ENCODE measurements at regions of chr1 and their contacts with region 1.

Region 1: DNA sequence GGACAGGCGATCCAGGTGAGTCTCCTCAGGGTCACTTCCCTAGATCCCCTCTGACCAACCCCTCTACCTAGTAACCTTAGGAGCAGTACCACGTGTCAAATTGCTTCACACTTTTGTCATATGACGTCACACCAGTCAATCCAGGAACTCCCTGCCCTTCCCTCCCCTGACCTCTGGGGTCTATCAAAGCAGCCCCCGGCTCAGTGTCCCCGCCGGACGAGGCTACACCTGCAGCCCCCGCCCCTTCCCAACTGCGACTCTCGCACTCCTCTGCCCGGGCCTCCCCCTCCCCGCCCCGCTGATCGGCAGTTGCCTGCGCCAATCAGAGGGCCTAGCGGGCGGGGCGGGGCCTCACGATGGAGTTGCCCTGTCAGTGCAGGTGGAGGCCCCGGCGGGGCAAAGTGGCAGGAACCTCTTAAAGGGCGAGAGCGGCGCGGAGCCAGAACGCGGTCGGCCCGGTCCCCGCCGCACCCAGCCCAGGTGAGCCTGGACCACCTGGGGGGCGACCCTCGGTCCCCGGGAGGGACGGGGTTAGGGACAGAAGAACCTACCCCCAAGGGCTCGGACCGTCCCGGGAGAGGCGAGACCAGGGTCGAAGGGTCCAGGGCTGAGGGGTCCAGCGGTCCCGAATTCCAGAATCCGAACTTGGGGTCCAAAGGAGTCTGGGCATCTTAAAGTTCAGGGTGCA is 27.5 kb upstream of the EPB41 start:
- DNase-seq: peak; percentile 87 to 97 (median 91)
- ATAC-seq: peak; percentile 83
- H3K4me3 ChIP-seq: peak overlapping the region; percentile 98
- H3K4me3 Mint-ChIP-seq: peak overlapping the region; percentile 70 to 95 (median 84)
- H3K27ac ChIP-seq: peak overlapping the region; percentile 79
- H3K27ac Mint-ChIP-seq: peak overlapping the region; percentile 81 to 98 (median 94)
- H3K4me1 ChIP-seq: peaks cover 32 to 36% of the 10 kb centered on the region in 2 donors
- H3K4me1 Mint-ChIP-seq: peaks cover 37 to 68% (median 50%) of the 10 kb centered on the region in 7 donors
- H3K27me3 ChIP-seq: no peaks in the 10 kb centered on the region
- H3K27me3 Mint-ChIP-seq: no peaks in the 10 kb centered on the region

Region 2: DNA sequence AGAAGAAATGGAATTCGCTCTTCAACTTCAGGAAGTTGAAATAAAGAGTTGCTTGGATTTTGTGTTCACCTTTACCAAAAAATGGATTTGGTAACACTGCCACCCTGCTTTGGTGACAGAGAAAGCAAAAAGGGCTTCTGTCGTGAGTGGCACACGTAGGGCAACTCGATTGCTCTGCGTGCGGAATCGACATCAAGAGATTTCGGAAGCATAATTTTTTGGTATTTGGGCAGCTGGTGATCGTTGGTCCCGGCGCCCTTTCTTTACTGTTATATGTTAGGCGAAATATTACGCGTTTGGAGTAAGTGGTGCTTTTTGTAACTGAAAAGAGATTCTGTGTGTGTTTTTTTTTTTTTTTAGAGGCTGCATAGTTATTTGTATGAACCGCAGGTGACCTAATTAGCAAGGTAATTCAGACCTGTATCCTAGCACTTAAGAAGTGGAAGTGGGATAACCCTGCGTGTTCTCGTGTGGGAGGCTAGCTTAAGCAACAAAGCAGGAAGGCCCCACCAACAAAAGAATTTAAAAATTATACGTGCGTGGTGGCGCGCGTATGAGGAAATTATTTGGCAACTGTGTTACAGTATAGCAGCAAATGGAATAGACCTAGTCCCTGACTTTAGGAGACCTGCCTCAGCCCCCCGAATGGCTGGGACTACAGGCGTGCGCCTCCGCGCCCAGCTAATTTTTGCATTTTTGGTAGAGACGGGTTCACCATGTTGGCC is 238.2 kb before region 1 on chr1 and contains the start of gene RNU11:
- CTCF ChIA-PET with region 1: no interaction called
- POLR2A ChIA-PET with region 1: interaction called, 8 read pairs
- intact Hi-C with region 1: loop called in 1 of 2 experiments (anchors 2 kb)
- DNase-seq: peak in 8 of 9 donors; percentile 67 to 97 (median 91)
- ATAC-seq: peak; percentile 86
- H3K4me3 ChIP-seq: peak within 1 kb of the TSS; percentile 60
- H3K4me3 Mint-ChIP-seq: peak within 1 kb of the TSS; percentile 70 to 96 (median 90)
- H3K27ac ChIP-seq: peak within 1 kb of the TSS; percentile 93
- H3K27ac Mint-ChIP-seq: peak within 1 kb of the TSS; percentile 97 to 100 (median 99)
- H3K4me1 ChIP-seq: peaks cover 25 to 27% of the 10 kb centered on the region in 2 donors
- H3K4me1 Mint-ChIP-seq: peaks cover 14 to 39% (median 31%) of the 10 kb centered on the region in 7 donors
- H3K27me3 ChIP-seq: no peaks in the 10 kb centered on the region
- H3K27me3 Mint-ChIP-seq: no peaks in the 10 kb centered on the region
- total RNA-seq, gene RNU11: not detected

Region 3: GRCh38 chr1:28845786-28846543 is 40.9 kb before region 1 on chr1:
- CTCF ChIA-PET with region 1: no interaction called
- POLR2A ChIA-PET with region 1: no interaction called
- intact Hi-C with region 1: no loop called
- DNase-seq: peak in 2 of 9 donors; percentile 6 to 7
- ATAC-seq: no peak
- H3K4me3 ChIP-seq: no peak overlapping the region
- H3K4me3 Mint-ChIP-seq: peak overlapping the region in 2 of 10 donors; percentile 0 to 8
- H3K27ac ChIP-seq: no peak overlapping the region
- H3K27ac Mint-ChIP-seq: peak overlapping the region in 6 of 9 donors; percentile 9 to 86 (median 57)
- H3K4me1 ChIP-seq: no peaks in the 10 kb centered on the region
- H3K4me1 Mint-ChIP-seq: peaks cover 4 to 10% (median 8%) of the 10 kb centered on the region in 7 donors
- H3K27me3 ChIP-seq: no peaks in the 10 kb centered on the region
- H3K27me3 Mint-ChIP-seq: peaks cover 0 to 11% (median 0%) of the 10 kb centered on the region in 5 donors

Region 4: GRCh38 chr1:28926629-28927265 is 39.9 kb after region 1 on chr1:
- CTCF ChIA-PET with region 1: interaction called, 8 read pairs
- POLR2A ChIA-PET with region 1: interaction called, 5 read pairs
- intact Hi-C with region 1: loop called (anchors 1 kb)
- DNase-seq: peak in 7 of 9 donors; percentile 61 to 85 (median 80)
- ATAC-seq: peak; percentile 93
- H3K4me3 ChIP-seq: peak overlapping the region; percentile 24
- H3K4me3 Mint-ChIP-seq: peak overlapping the region; percentile 54 to 91 (median 76)
- H3K27ac ChIP-seq: peak overlapping the region; percentile 69
- H3K27ac Mint-ChIP-seq: peak overlapping the region; percentile 65 to 98 (median 91)
- H3K4me1 ChIP-seq: peaks cover 53 to 54% of the 10 kb centered on the region in 2 donors
- H3K4me1 Mint-ChIP-seq: peaks cover 46 to 85% (median 55%) of the 10 kb centered on the region in 7 donors
- H3K27me3 ChIP-seq: no peaks in the 10 kb centered on the region
- H3K27me3 Mint-ChIP-seq: no peaks in the 10 kb centered on the region

Region 5: DNA sequence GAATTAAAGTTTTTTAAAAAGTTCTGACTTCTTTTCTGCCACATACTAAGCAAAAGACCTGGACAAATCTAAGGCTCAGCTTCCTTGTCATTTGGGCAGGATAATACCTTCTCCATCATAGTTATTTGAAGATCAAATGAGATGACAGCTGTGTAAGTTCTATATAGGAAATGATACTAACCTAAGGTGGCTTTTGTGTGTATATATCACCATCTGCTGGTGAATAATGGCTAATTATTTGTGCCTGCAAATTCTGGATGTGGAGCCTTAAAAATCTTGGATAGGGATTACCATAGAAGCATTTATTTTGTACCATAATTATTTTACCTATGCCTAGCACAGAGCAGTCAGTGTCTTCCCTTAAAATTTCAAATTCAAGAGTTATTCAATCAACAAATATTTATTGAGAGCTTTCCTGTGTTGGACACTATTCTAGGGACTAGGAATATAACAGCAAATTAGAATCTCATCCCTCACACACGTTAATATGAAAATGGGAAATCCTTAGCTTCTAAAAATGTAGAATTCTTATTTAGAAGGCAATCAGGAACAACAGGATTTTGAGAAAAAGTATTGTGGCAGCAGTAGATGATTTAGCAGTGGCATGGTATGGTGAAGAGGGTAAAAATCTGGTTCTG is 147.1 kb after region 1 on chr1:
- CTCF ChIA-PET with region 1: interaction called, 105 read pairs
- POLR2A ChIA-PET with region 1: interaction called, 11 read pairs
- intact Hi-C with region 1: loop called (anchors 1 kb)
- DNase-seq: peak in 7 of 9 donors; percentile 9 to 44 (median 30)
- ATAC-seq: peak; percentile 75
- H3K4me3 ChIP-seq: no peak overlapping the region
- H3K4me3 Mint-ChIP-seq: no peak overlapping the region
- H3K27ac ChIP-seq: no peak overlapping the region
- H3K27ac Mint-ChIP-seq: peak overlapping the region in 3 of 9 donors; percentile 18 to 64 (median 48)
- H3K4me1 ChIP-seq: no peaks in the 10 kb centered on the region
- H3K4me1 Mint-ChIP-seq: peaks cover 0 to 3% (median 0%) of the 10 kb centered on the region in 7 donors
- H3K27me3 ChIP-seq: no peaks in the 10 kb centered on the region
- H3K27me3 Mint-ChIP-seq: no peaks in the 10 kb centered on the region

Region 6: GRCh38 chr1:29197585-29197924 is 310.7 kb after region 1 on chr1:
- CTCF ChIA-PET with region 1: interaction called, 36 read pairs
- POLR2A ChIA-PET with region 1: no interaction called
- intact Hi-C with region 1: loop called (anchors 1 kb)
- DNase-seq: peak in 7 of 9 donors; percentile 11 to 53 (median 34)
- ATAC-seq: peak; percentile 80
- H3K4me3 ChIP-seq: no peak overlapping the region
- H3K4me3 Mint-ChIP-seq: no peak overlapping the region
- H3K27ac ChIP-seq: no peak overlapping the region
- H3K27ac Mint-ChIP-seq: no peak overlapping the region
- H3K4me1 ChIP-seq: no peaks in the 10 kb centered on the region
- H3K4me1 Mint-ChIP-seq: peaks cover 0 to 11% (median 0%) of the 10 kb centered on the region in 7 donors
- H3K27me3 ChIP-seq: no peaks in the 10 kb centered on the region
- H3K27me3 Mint-ChIP-seq: no peaks in the 10 kb centered on the region

Measured in naive thymus-derived CD4-positive, alpha-beta T cell (primary cell).